ENCODE measurements at regions of chr9 and their contacts with region 1.

Region 1: DNA sequence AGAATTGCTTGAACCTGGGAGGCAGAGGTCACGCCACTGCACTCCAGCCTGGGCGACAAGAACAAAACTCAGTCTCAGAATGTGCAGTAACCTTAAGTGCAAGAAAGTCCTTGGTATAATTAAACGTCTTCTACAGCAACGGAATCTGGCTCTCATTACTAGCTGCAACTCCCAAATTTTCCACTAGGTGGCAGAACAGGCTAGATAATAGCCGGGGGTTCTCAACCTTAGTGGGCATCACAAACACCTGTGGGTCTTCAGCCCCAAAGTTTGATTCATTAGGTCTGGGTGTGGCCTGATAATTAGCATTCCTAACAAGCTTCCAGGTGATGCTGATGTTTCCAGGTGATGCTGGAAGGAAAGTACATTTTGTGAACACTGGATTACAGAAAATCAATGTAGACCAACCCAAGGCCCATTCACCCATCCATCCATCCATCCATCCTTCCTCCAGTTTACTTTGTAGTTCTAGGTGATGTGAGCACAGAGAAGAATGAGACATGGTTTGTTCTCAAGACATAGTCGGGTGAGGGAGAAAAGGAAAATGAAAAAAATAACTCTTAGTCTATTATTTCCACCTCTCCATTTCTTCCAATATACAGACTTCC is 37.3 kb downstream of the FBXW2 start:
- DNase-seq: peak; percentile 45 to 48
- H3K4me3 ChIP-seq: no peak overlapping the region
- H3K27ac ChIP-seq: peak overlapping the region in 2 of 3 donors; percentile 20
- H3K4me1 ChIP-seq: peaks cover 8 to 23% of the 10 kb centered on the region in 2 donors
- H3K27me3 ChIP-seq: no peaks in the 10 kb centered on the region
- CTCF ChIP-seq: peak; percentile 83 to 94 (median 87)
- POLR2A ChIP-seq: no peak

Region 2: GRCh38 chr9:120936011-120936763 is 180.3 kb after region 1 on chr9:
- intact Hi-C with region 1: loop called (anchors 5 kb)
- DNase-seq: peak; percentile 91 to 94
- H3K4me3 ChIP-seq: no peak overlapping the region
- H3K27ac ChIP-seq: peak overlapping the region; percentile 57 to 91 (median 78)
- H3K4me1 ChIP-seq: peaks cover 33 to 52% of the 10 kb centered on the region in 2 donors
- H3K27me3 ChIP-seq: no peaks in the 10 kb centered on the region
- CTCF ChIP-seq: peak; percentile 73 to 89 (median 79)
- POLR2A ChIP-seq: no peak

Region 3: GRCh38 chr9:121059998-121060636 is 304.2 kb after region 1 on chr9:
- intact Hi-C with region 1: loop called (anchors 5 kb)
- DNase-seq: peak; percentile 19 to 23
- H3K4me3 ChIP-seq: no peak overlapping the region
- H3K27ac ChIP-seq: no peak overlapping the region
- H3K4me1 ChIP-seq: no peaks in the 10 kb centered on the region
- H3K27me3 ChIP-seq: no peaks in the 10 kb centered on the region
- CTCF ChIP-seq: peak in 5 of 6 experiments; percentile 31 to 78 (median 76)
- POLR2A ChIP-seq: no peak

Measured in thyroid gland (tissue), 4 donors.